Calu3 (cell line): ENCODE measurements at regions of chr11 and their contacts with region 1.

Region 1: DNA sequence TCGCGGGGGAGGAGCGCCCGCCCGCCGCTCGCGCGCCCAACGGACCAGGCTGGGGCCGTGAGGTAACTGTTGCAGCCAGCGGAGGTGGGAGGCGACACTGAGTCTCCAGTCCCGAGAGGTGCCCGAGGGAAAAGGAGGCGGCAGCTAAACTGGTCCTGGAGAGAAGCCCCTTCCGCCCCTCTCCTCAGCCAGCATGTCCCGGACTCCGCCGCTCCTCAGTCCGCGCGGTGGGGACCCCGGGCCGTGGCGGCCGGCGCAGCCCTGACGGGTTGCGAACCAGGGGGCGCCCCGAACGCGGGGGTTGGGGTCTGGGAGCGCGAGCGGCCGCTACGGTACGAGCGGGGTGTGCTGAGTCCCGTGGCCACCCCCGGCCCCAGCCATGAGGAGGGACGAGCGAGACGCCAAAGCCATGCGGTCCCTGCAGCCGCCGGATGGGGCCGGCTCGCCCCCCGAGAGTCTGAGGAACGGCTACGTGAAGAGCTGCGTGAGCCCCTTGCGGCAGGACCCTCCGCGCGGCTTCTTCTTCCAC is at the start of gene PDE3B:
- DNase-seq: peak; percentile 85
- H3K4me3 Mint-ChIP-seq: peak within 1 kb of the TSS; percentile 95
- H3K27ac Mint-ChIP-seq: peak within 1 kb of the TSS; percentile 23
- H3K4me1 Mint-ChIP-seq: peaks cover 22% of the 10 kb centered on the region
- H3K27me3 Mint-ChIP-seq: no peaks in the 10 kb centered on the region
- CTCF ChIP-seq: no peak
- total RNA-seq, gene PDE3B: 4.5 and 4.6 TPM in 2 replicates

Region 2: GRCh38 chr11:14519917-14520746 is 123.6 kb before region 1 on chr11 and contains the start of gene PSMA1:
- CTCF ChIA-PET with region 1: interaction called, 3 read pairs
- intact Hi-C with region 1: loop called (anchors 5 kb)
- DNase-seq: peak; percentile 91
- H3K4me3 Mint-ChIP-seq: peak within 1 kb of the TSS; percentile 85
- H3K27ac Mint-ChIP-seq: peak within 1 kb of the TSS; percentile 93
- H3K4me1 Mint-ChIP-seq: peaks cover 16% of the 10 kb centered on the region
- H3K27me3 Mint-ChIP-seq: no peaks in the 10 kb centered on the region
- CTCF ChIP-seq: no peak
- total RNA-seq, gene PSMA1: 187 and 205 TPM in 2 replicates

Region 3: DNA sequence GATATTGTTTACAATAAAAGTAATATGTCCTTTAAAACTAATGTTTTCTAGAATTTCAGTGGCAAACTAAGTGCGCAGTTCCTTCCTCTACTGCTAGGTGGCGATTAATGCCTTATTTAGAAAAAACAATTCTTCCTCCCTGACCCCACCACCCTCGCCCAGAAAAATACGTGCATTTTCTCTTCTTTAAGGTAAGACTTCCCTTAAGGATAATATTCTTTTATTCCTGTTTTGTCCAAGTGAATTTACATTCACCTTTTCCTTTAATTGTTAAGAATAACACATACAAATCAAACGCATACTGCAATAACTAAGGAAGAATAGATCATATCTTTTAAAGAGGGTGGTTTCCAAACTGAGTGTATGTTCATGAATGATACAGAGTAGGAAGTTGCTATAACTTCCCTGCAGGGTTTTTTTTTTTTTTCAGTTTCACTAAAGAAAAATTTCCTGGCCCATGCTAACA is 106.6 kb before region 1 on chr11:
- CTCF ChIA-PET with region 1: no interaction called
- intact Hi-C with region 1: loop called (anchors 2 kb)
- DNase-seq: peak; percentile 22
- H3K4me3 Mint-ChIP-seq: no peak overlapping the region
- H3K27ac Mint-ChIP-seq: no peak overlapping the region
- H3K4me1 Mint-ChIP-seq: no peaks in the 10 kb centered on the region
- H3K27me3 Mint-ChIP-seq: no peaks in the 10 kb centered on the region
- CTCF ChIP-seq: peak; percentile 72

Region 4: DNA sequence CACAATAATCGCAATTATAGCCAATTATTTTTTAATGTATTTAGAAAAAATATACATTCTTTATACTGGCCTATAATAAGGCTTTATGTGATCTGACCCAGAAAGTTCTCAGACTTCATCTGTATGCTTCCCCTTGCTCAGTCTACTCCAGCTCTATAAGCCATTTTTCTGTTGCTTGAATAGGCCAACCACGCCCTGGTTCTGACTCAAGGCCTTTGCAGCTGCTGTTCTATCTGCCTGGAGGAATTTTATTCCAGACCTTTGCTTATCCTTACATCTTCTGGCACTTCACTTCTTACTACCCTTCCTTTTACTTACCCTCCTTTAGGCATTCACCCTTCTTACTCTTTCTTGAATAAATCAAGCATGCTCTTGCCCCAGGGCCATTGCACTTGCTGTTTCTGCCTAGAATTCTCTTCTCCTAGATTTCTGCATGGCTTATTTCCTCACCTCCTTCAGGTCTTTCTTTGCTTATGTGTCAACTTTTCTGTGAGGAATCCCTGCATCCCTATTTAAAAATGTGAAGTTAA is 55.0 kb before region 1 on chr11:
- CTCF ChIA-PET with region 1: no interaction called
- intact Hi-C with region 1: loop called (anchors 2 kb)
- DNase-seq: no peak
- H3K4me3 Mint-ChIP-seq: no peak overlapping the region
- H3K27ac Mint-ChIP-seq: no peak overlapping the region
- H3K4me1 Mint-ChIP-seq: peaks cover 12% of the 10 kb centered on the region
- H3K27me3 Mint-ChIP-seq: no peaks in the 10 kb centered on the region
- CTCF ChIP-seq: no peak